AG04450 (cell line): ENCODE measurements at regions of chr7 and their contacts with region 1.

Region 1: DNA sequence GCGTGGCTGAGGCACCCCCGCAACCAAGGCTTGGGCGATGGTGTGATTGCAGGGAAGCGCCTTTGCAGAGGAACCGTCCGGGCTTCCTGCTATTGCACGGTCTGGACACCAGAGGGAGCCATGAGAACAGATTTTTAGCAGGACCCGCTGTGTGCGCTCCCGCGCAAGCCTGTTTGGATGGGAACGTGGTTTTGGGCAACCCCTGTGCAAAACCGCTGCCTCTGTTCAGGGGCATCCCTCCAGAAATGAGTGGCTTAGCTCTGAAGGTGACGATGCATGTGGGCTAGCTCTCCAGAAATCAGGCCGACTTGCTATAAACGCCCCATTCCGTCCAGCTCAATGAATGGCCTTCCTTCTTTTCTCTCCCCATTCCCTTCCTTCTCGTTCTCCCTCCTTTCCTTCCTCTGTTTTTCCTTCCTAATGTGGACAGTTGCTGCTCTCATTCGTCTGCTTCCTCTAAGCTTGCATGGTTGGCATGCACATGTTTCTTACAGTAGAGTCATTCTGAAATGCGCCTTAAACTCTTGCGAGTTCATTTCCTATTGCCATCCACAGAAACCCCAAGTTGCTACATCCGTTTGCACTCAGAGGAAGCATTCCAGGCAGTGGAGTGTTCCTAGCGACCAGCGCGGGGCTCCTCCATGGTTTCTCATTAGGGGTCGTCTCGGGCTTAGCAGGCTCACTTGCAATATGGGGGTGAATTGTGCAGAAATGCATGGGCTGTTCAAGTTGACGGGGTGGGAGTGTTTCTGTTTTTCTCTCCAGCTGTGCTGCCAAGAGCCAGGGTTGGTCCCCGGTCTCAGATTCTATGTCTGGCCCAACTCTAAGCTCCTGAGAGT is 302.5 kb upstream of the GALNT17 start:
- DNase-seq: no peak
- H3K4me3 ChIP-seq: peak overlapping the region; percentile 40
- H3K27ac ChIP-seq: no peak overlapping the region
- H3K27me3 ChIP-seq: no peaks in the 10 kb centered on the region
- CTCF ChIP-seq: peak; percentile 86

Region 2: GRCh38 chr7:70539205-70539604 is 290.2 kb before region 1 on chr7:
- CTCF ChIA-PET with region 1: no interaction called
- POLR2A ChIA-PET with region 1: no interaction called
- DNase-seq: no peak
- H3K4me3 ChIP-seq: no peak overlapping the region
- H3K27ac ChIP-seq: no peak overlapping the region
- H3K27me3 ChIP-seq: peaks cover 2% of the 10 kb centered on the region
- CTCF ChIP-seq: no peak

Region 3: GRCh38 chr7:70807650-70808049 is 21.8 kb before region 1 on chr7:
- CTCF ChIA-PET with region 1: interaction called, 14 read pairs
- POLR2A ChIA-PET with region 1: no interaction called
- DNase-seq: no peak
- H3K4me3 ChIP-seq: no peak overlapping the region
- H3K27ac ChIP-seq: no peak overlapping the region
- H3K27me3 ChIP-seq: no peaks in the 10 kb centered on the region
- CTCF ChIP-seq: no peak